Left colon (tissue), 2 donors: ENCODE measurements at regions of chr7 and their contacts with region 1.

Region 1: GRCh38 chr7:7329326-7329725 is 147.0 kb downstream of the C1GALT1 start:
- DNase-seq: no peak
- ATAC-seq: no peak

Region 2: DNA sequence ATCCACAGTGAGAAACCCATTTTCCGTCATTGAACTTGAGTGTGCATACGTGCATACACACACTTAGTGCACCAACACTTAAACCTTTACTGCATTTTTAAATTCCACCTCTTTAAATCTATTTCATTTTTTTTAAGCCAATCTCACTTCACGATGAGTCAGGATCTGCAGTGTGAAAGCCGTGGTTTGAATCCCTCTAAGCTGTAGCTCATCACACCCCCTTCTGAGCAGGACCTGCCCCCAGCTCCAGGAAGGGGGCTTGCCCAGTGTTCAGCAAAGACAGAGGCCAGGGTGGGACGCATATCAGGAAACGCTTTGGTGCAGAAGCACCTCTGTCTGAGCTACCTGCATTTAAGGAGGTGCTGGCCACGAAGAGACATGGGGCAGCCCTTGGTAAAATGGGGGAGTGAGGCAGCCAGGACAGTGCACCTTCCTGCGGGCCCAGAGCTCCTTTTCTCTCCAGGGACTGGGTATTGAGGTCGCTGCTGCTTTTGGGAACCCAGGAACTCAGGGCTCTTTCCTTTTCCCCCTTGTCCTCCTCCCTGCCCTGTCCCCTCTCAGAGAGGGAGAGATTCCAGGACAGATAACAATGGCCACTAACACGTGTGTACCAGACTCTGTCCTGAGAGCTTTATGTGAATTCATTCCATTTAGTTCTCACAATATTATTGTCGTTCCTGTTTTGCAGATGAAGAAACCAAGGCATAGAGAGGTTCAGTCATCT is 670.5 kb before region 1 on chr7:
- intact Hi-C with region 1: no loop called
- DNase-seq: no peak
- ATAC-seq: peak; percentile 27

Region 3: GRCh38 chr7:7292085-7292484 is 37.2 kb before region 1 on chr7:
- intact Hi-C with region 1: loop called in 1 of 2 experiments (anchors 5 kb)
- DNase-seq: no peak
- ATAC-seq: no peak